CD4-positive, alpha-beta memory T cell (primary cell): ENCODE measurements at regions of chr14 and their contacts with region 1.

Region 1: GRCh38 chr14:99266181-99267178 is 5.5 kb downstream of the BCL11B start:
- DNase-seq: peak; percentile 87 to 90 (median 88)
- H3K4me3 ChIP-seq: peak overlapping the region; percentile 91 to 99
- H3K4me3 Mint-ChIP-seq: peak overlapping the region; percentile 94 to 100 (median 98)
- H3K27ac ChIP-seq: peak overlapping the region; percentile 98
- H3K27ac Mint-ChIP-seq: peak overlapping the region; percentile 99 to 100 (median 100)
- H3K4me1 ChIP-seq: peaks cover 54% of the 10 kb centered on the region
- H3K4me1 Mint-ChIP-seq: peaks cover 42 to 72% (median 55%) of the 10 kb centered on the region in 4 donors
- H3K27me3 ChIP-seq: no peaks in the 10 kb centered on the region
- H3K27me3 Mint-ChIP-seq: no peaks in the 10 kb centered on the region

Region 2: GRCh38 chr14:98167705-98168104 is 1098.8 kb before region 1 on chr14:
- CTCF ChIA-PET with region 1: interaction called, 14 read pairs
- POLR2A ChIA-PET with region 1: interaction called, 20 read pairs
- intact Hi-C with region 1: no loop called
- DNase-seq: peak in 2 of 5 donors; percentile 22 to 54
- H3K4me3 ChIP-seq: peak overlapping the region in 1 of 2 donors; percentile 15
- H3K4me3 Mint-ChIP-seq: peak overlapping the region in 7 of 8 donors; percentile 60 to 90 (median 71)
- H3K27ac ChIP-seq: peak overlapping the region; percentile 45
- H3K27ac Mint-ChIP-seq: peak overlapping the region; percentile 79 to 99 (median 90)
- H3K4me1 ChIP-seq: peaks cover 63% of the 10 kb centered on the region
- H3K4me1 Mint-ChIP-seq: peaks cover 53 to 82% (median 68%) of the 10 kb centered on the region in 4 donors
- H3K27me3 ChIP-seq: no peaks in the 10 kb centered on the region
- H3K27me3 Mint-ChIP-seq: no peaks in the 10 kb centered on the region

Region 3: DNA sequence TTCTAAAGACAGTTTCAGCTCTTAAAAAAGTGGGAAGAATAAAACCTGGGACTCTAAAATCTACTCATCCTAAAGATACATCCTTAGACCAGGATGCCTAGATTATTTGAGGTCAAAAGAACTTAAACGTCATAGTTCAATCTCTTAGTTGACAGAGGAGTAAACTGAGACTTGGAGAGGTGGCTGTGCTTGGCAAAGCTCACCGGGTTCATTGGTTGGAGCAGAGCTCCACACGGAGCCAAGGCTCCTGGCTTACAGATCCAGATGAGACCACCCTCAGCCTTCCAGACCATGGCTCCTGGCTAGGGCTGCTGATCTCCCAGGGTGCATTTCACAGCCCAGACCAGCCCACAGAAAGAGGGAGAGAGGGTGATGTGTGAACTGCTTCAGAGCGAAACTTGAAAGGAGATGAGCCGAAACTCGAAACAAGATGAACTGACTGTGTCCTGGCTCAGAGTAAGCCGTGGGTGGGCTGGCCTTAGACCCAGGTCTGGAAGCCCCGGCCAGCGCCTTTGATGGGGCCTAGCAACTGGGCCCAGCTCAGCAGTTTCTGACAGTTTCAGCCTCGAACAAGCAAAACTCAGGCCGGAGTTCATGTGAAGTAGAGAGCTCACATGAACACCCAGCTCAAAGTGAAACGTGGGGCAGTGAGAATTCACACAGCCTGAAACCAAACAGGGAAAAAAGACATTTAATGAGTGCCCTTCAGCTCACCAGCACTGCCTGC is 1039.3 kb before region 1 on chr14:
- CTCF ChIA-PET with region 1: interaction called, 3 read pairs
- POLR2A ChIA-PET with region 1: interaction called, 12 read pairs
- intact Hi-C with region 1: loop called (anchors 5 kb)
- DNase-seq: peak in 3 of 5 donors; percentile 22 to 24 (median 24)
- H3K4me3 ChIP-seq: peak overlapping the region in 1 of 2 donors; percentile 24
- H3K4me3 Mint-ChIP-seq: peak overlapping the region; percentile 56 to 89 (median 71)
- H3K27ac ChIP-seq: peak overlapping the region; percentile 55
- H3K27ac Mint-ChIP-seq: peak overlapping the region; percentile 89 to 97 (median 90)
- H3K4me1 ChIP-seq: peaks cover 96% of the 10 kb centered on the region
- H3K4me1 Mint-ChIP-seq: peaks cover 67 to 88% (median 77%) of the 10 kb centered on the region in 4 donors
- H3K27me3 ChIP-seq: no peaks in the 10 kb centered on the region
- H3K27me3 Mint-ChIP-seq: no peaks in the 10 kb centered on the region

Region 4: GRCh38 chr14:98931911-98932310 is 334.6 kb before region 1 on chr14:
- CTCF ChIA-PET with region 1: interaction called, 3 read pairs
- POLR2A ChIA-PET with region 1: interaction called, 15 read pairs
- intact Hi-C with region 1: loop called (anchors 5 kb)
- DNase-seq: peak; percentile 82 to 85 (median 84)
- H3K4me3 ChIP-seq: peak overlapping the region in 1 of 2 donors; percentile 41
- H3K4me3 Mint-ChIP-seq: peak overlapping the region; percentile 68 to 91 (median 83)
- H3K27ac ChIP-seq: peak overlapping the region; percentile 16
- H3K27ac Mint-ChIP-seq: peak overlapping the region; percentile 79 to 97 (median 91)
- H3K4me1 ChIP-seq: peaks cover 66% of the 10 kb centered on the region
- H3K4me1 Mint-ChIP-seq: peaks cover 62 to 91% (median 78%) of the 10 kb centered on the region in 4 donors
- H3K27me3 ChIP-seq: no peaks in the 10 kb centered on the region
- H3K27me3 Mint-ChIP-seq: no peaks in the 10 kb centered on the region

Region 5: DNA sequence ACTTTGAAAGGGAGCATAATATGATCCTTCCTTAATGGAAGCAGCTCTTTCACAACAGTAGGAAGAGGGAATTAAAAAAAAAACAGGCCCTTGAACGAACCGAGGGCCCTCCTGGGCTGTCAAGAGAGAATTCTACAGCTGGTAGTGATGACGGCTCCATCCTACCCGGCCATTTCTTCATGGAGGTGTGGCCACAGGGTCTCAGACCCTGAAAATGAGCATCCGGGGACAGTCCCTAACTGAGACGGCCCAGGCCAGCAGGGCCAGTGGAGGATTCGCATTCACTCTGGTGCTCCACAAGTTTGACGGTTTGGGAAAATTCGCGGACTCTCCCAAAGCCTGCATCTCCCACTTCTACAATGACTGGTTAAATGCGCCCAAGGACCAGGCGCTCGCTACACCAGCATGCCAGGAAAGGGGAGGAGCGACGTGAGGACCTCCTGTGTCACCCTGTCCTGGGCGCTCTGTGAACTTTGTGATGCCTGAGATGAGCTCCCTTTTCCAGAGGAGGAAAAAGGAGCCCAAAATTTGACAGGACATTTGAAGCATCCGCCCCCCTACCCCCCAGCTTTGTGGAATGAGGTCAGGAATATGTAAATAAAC is 61.3 kb before region 1 on chr14:
- CTCF ChIA-PET with region 1: interaction called, 12 read pairs
- POLR2A ChIA-PET with region 1: interaction called, 6,015 read pairs
- intact Hi-C with region 1: no loop called
- DNase-seq: no peak
- H3K4me3 ChIP-seq: no peak overlapping the region
- H3K4me3 Mint-ChIP-seq: peak overlapping the region; percentile 68 to 85 (median 78)
- H3K27ac ChIP-seq: peak overlapping the region; percentile 70
- H3K27ac Mint-ChIP-seq: peak overlapping the region; percentile 93 to 96 (median 94)
- H3K4me1 ChIP-seq: peaks cover 100% of the 10 kb centered on the region
- H3K4me1 Mint-ChIP-seq: peaks cover 82 to 100% (median 97%) of the 10 kb centered on the region in 4 donors
- H3K27me3 ChIP-seq: no peaks in the 10 kb centered on the region
- H3K27me3 Mint-ChIP-seq: no peaks in the 10 kb centered on the region

Region 6: DNA sequence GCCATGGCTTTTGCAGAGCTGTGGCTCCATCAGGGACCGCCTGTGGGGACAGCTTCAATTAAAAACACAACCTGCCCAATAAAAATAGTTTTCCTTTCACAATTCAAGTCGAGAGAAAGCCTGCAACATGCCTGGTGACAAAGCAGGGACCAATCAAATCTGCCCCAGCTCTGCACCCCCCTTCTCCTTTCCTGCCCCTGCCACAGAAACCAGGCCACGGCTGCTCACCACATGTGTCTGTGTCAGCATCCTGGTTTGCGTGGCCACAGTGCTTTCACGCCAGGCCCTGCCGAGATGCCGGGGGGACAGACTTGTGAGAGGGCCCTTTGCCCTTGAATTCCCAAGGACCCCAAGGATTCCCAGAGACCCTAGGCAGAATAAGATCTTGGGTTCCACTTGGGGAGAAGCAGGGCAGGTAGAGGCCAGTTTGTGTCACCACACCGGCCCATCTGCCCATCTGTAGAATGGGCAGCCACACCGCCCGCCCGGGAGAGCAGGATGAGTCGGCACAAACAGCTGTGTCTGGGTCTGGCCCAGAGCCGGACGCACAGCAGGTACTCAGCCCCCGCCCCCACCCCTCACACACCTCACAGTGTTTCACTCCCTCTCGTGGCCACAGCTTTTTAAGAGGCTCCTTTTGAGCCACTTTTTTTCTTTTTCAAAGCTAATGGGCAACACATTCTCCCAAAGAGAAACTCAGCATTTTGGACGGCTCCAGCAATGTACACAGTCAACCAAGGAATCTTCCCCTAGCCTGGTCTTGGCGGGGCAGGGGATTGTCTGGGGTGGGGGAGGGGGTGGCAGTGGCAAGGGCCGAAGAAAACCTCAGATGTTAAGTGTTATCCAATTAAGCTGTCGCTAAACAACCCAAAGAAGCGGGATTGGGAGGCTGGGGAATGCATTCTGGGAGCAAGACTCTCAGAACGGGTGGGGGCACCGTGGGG is 36.0 kb before region 1 on chr14:
- CTCF ChIA-PET with region 1: interaction called, 270 read pairs
- POLR2A ChIA-PET with region 1: interaction called, 6,015 read pairs
- intact Hi-C with region 1: loop called (anchors 1 kb)
- DNase-seq: peak; percentile 88 to 95 (median 90)
- H3K4me3 ChIP-seq: peak overlapping the region in 1 of 2 donors; percentile 13
- H3K4me3 Mint-ChIP-seq: peak overlapping the region; percentile 56 to 94 (median 80)
- H3K27ac ChIP-seq: peak overlapping the region; percentile 98
- H3K27ac Mint-ChIP-seq: peak overlapping the region; percentile 98 to 99 (median 99)
- H3K4me1 ChIP-seq: peaks cover 100% of the 10 kb centered on the region
- H3K4me1 Mint-ChIP-seq: peaks cover 78 to 98% (median 89%) of the 10 kb centered on the region in 4 donors
- H3K27me3 ChIP-seq: no peaks in the 10 kb centered on the region
- H3K27me3 Mint-ChIP-seq: no peaks in the 10 kb centered on the region

Region 7: DNA sequence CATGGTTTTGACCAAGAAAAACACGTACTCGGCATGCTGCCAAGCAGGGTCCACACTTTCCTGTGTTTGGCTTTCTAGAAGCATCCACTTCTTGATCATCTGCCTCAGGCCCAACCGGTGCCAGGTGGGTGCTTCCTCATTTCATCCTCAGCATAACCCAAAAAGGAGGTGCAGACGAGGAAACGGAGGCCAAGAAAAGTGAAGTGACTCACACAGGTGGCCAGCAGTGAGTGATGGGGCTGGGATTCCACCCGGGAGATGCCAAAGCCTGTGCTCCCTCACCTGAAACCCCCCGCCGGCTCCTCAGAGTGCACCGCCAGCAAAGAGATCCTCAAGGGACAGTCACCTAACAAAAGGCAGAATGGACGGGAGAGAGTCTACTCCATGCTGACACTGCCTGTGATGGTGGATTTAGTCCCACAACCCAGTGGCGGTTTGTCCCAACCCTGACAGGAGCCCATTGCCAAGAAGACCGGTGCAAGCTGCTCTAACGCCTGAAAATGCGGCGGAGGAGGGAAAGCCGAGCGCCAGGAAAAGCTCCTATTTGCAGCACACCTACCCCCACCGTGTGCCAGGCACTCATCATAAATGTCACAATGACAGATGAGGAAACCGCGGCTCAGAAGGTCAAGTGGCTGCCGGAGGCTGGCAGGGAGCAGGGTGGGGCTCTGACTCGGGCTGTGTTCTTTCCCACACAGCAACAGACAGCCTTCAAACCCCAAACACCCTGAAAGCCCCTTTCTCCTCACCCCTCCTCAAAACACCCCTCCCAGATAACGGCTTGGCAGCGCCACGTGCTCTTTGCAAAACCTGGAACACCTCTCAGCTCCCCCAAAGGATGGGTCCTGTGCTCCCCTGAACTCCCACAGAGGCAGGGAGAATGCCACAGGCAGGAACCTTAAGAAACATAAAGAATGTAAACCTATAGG is 13.3 kb before region 1 on chr14:
- CTCF ChIA-PET with region 1: interaction called, 181 read pairs
- POLR2A ChIA-PET with region 1: interaction called, 6,015 read pairs
- intact Hi-C with region 1: no loop called
- DNase-seq: peak; percentile 61 to 88 (median 67)
- H3K4me3 ChIP-seq: peak overlapping the region; percentile 4 to 35
- H3K4me3 Mint-ChIP-seq: peak overlapping the region; percentile 84 to 98 (median 88)
- H3K27ac ChIP-seq: peak overlapping the region; percentile 98
- H3K27ac Mint-ChIP-seq: peak overlapping the region; percentile 92 to 100 (median 99)
- H3K4me1 ChIP-seq: peaks cover 100% of the 10 kb centered on the region
- H3K4me1 Mint-ChIP-seq: peaks cover 71 to 100% (median 89%) of the 10 kb centered on the region in 4 donors
- H3K27me3 ChIP-seq: no peaks in the 10 kb centered on the region
- H3K27me3 Mint-ChIP-seq: no peaks in the 10 kb centered on the region